ENCODE measurements at regions of chr18 and their contacts with region 1.

Region 1: GRCh38 chr18:69291044-69291443 is 109.6 kb upstream of the DOK6 start:
- DNase-seq: no peak
- ATAC-seq: no peak
- H3K4me3 ChIP-seq: no peak overlapping the region
- H3K4me3 Mint-ChIP-seq: no peak overlapping the region
- H3K27ac ChIP-seq: no peak overlapping the region
- H3K27ac Mint-ChIP-seq: no peak overlapping the region
- H3K4me1 ChIP-seq: no peaks in the 10 kb centered on the region
- H3K4me1 Mint-ChIP-seq: no peaks in the 10 kb centered on the region
- H3K27me3 ChIP-seq: no peaks in the 10 kb centered on the region
- H3K27me3 Mint-ChIP-seq: no peaks in the 10 kb centered on the region
- CTCF ChIP-seq: no peak

Region 2: DNA sequence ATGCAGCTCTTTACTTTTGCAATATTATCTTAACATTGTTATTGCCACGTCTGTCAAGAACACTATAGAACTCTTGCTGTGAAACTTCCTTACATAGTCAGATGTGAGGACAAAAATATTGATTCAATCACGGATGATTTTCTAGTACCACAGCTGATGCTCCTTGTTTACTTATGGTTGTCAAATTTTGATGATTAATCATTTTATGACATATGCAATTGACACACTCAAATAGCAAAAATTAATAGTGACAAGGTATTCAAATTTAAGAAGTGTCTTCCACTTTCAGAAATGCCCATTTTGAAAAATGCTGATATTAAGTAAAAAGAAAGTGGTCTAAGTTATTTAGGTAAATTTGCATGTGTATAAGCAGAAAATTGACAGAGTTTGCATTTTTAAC is 209.2 kb before region 1 on chr18:
- CTCF ChIA-PET with region 1: no interaction called
- POLR2A ChIA-PET with region 1: no interaction called
- intact Hi-C with region 1: no loop called
- DNase-seq: no peak
- ATAC-seq: no peak
- H3K4me3 ChIP-seq: no peak overlapping the region
- H3K4me3 Mint-ChIP-seq: no peak overlapping the region
- H3K27ac ChIP-seq: no peak overlapping the region
- H3K27ac Mint-ChIP-seq: no peak overlapping the region
- H3K4me1 ChIP-seq: no peaks in the 10 kb centered on the region
- H3K4me1 Mint-ChIP-seq: no peaks in the 10 kb centered on the region
- H3K27me3 ChIP-seq: no peaks in the 10 kb centered on the region
- H3K27me3 Mint-ChIP-seq: no peaks in the 10 kb centered on the region
- CTCF ChIP-seq: no peak

Region 3: GRCh38 chr18:69233465-69234054 is 57.5 kb before region 1 on chr18:
- CTCF ChIA-PET with region 1: no interaction called
- POLR2A ChIA-PET with region 1: no interaction called
- intact Hi-C with region 1: loop called in 1 of 2 experiments (anchors 10 kb)
- DNase-seq: no peak
- ATAC-seq: no peak
- H3K4me3 ChIP-seq: no peak overlapping the region
- H3K4me3 Mint-ChIP-seq: no peak overlapping the region
- H3K27ac ChIP-seq: no peak overlapping the region
- H3K27ac Mint-ChIP-seq: no peak overlapping the region
- H3K4me1 ChIP-seq: no peaks in the 10 kb centered on the region
- H3K4me1 Mint-ChIP-seq: no peaks in the 10 kb centered on the region
- H3K27me3 ChIP-seq: no peaks in the 10 kb centered on the region
- H3K27me3 Mint-ChIP-seq: no peaks in the 10 kb centered on the region
- CTCF ChIP-seq: no peak

Measured in CD8-positive, alpha-beta T cell (primary cell).